Psoas muscle (tissue), 8 donors: ENCODE measurements at regions of chr9 and their contacts with region 1.

Region 1: DNA sequence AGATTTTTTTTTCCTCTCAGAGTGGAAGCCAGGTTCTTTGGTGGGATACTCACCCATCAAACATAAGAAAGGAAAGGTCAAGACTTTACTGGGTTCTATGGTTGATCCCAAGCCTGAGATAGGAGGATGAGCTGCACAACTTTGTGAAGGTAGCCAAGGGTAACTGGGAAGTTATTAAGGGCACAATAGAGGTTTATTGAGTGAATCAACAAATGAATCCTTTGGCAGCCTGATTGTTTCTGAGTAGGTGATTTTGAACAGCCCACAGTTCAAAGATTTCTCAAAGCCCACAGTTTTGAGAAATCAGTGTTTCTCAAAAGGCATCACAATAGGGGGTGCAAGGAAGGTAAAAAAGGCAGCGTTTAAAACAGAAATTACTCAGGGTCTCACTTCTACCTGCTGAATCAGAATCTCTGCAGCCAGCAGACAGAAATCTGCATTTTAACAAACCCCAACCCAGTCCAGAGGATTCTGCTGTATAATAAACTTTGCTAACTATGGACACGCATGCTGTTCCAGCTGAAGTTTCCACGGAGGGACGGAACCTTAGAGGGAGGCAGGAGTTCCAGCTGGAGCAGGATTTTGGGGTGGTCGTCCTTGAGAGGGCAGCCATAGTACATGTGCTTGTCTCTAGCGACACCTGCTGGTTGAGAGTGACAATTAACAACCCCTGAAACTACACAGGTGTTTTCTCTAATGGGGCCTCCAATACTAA is 32.7 kb upstream of the FSD1L start:
- DNase-seq: no peak
- ATAC-seq: peak; percentile 66 to 87 (median 76)
- H3K4me3 ChIP-seq: no peak overlapping the region
- H3K27ac ChIP-seq: no peak overlapping the region
- H3K4me1 ChIP-seq: no peaks in the 10 kb centered on the region
- H3K27me3 ChIP-seq: no peaks in the 10 kb centered on the region
- CTCF ChIP-seq: peak; percentile 90

Region 2: GRCh38 chr9:104795082-104795481 is 620.0 kb before region 1 on chr9:
- intact Hi-C with region 1: loop called in 1 of 2 experiments (anchors 10 kb)
- DNase-seq: no peak
- ATAC-seq: peak in 2 of 4 donors; percentile 26 to 56
- H3K4me3 ChIP-seq: no peak overlapping the region
- H3K27ac ChIP-seq: peak overlapping the region; percentile 21
- H3K4me1 ChIP-seq: no peaks in the 10 kb centered on the region
- H3K27me3 ChIP-seq: no peaks in the 10 kb centered on the region
- CTCF ChIP-seq: no peak

Region 3: GRCh38 chr9:104991144-104991953 is 423.8 kb before region 1 on chr9:
- intact Hi-C with region 1: loop called in 1 of 2 experiments (anchors 10 kb)
- DNase-seq: peak; percentile 93 to 97
- ATAC-seq: peak; percentile 87 to 91 (median 90)
- H3K4me3 ChIP-seq: peak overlapping the region; percentile 76
- H3K27ac ChIP-seq: peak overlapping the region; percentile 98
- H3K4me1 ChIP-seq: peaks cover 30% of the 10 kb centered on the region
- H3K27me3 ChIP-seq: no peaks in the 10 kb centered on the region
- CTCF ChIP-seq: no peak

Region 4: DNA sequence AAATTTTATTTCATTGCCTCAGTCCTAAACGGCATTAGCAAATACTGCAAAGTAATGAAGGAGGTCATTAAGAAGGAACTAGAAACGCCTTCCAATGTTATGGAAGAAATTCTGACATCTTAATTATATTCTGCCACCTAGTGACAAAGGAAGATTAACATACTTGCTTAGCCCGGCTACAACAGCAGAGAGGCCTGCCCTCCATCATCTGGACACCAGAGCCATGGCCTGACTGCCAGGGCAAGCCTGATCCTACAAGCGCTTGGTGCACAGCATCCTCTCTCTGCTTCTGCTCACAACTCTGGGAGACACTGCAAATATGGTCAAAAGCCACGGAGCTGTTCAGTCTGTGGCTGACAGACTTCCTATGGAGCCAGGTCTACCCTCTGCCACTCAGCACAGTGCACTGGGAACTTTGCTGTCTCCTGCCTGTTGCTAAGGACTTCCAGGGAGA is 257.9 kb before region 1 on chr9:
- intact Hi-C with region 1: loop called in 1 of 2 experiments (anchors 5 kb)
- DNase-seq: peak; percentile 47 to 69
- ATAC-seq: peak; percentile 82 to 95 (median 89)
- H3K4me3 ChIP-seq: no peak overlapping the region
- H3K27ac ChIP-seq: no peak overlapping the region
- H3K4me1 ChIP-seq: peaks cover 5% of the 10 kb centered on the region
- H3K27me3 ChIP-seq: no peaks in the 10 kb centered on the region
- CTCF ChIP-seq: peak; percentile 52

Region 5: DNA sequence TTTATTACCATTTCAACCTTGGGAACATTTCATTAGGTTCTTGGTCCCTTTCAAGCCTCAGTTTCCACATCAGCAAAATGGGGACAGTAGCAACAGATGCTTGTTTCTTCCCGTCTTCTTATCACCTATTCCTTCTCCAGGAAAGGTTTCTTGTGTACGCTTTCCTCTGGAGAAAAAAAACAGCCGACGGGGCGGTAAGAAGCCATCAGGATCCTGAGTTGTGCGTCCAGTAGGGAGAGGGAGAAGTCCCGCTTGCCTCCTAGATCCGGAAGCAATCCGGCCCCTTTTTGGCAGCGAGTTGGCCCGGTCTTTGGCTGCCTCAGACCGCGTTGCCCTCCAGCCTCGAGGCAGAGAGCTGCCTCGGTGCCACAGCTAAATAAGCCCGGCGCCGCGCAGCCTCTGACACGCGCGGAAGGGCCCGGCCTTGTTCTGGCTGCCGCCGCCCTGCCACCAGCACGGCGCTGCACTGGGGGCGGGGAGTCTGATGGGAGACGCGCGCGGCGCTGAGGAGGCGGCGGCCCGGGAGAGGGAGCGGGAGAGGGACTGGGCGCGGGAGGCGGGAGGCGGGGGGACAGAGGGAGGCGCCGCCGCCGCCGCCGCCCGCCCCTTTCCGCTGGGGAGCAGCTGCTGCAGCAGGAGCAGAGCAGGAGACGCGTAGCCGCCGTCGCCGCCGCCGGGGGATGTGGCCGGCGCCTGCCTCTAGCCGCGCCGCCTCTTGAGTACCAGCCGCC is 170.9 kb before region 1 on chr9 and contains the start of gene SLC44A1:
- intact Hi-C with region 1: loop called in 1 of 2 experiments (anchors 5 kb)
- DNase-seq: peak; percentile 99
- ATAC-seq: peak; percentile 98 to 99 (median 99)
- H3K4me3 ChIP-seq: peak within 1 kb of the TSS; percentile 83
- H3K27ac ChIP-seq: peak within 1 kb of the TSS; percentile 80
- H3K4me1 ChIP-seq: peaks cover 9% of the 10 kb centered on the region
- H3K27me3 ChIP-seq: no peaks in the 10 kb centered on the region
- CTCF ChIP-seq: peak; percentile 16
- total RNA-seq, gene SLC44A1: 7.0 to 18.9 (median 9.8) TPM

Region 6: DNA sequence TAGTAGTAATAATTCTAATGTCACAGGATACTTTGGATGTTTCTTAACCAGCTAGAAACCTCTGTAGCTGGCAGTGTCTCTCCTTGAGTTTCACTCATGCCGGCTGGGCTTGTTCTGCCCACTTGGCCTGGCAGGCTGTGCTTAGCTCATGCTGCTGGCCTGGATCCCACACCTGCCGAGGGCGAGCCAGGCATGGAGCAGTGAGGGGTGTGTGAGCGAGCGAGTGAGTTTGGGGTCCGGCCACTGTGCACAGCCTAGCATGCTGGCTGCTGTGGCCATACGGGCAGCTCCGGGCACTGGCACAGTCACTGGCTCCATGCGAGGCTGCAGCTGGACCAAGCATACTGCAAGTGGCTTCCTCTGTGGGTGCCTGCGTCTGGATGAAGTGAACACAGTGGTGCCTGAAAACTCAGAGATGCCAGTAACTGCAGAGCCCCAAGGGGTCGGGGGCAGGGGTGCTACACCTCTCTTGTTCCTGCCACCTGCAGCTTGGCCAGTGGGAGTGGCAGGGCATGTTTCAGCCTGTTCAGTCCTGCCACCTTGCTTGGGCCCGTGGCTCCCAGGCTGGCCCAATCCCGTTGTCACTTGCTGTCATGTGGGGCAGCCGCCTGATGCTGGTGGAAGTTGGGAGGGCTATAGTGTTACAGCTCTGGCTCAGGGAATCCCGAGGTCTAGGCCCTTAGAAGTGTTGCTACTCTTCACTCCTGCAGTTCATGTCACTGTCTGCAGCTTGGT is 42.6 kb after region 1 on chr9:
- intact Hi-C with region 1: no loop called
- DNase-seq: peak; percentile 56 to 80
- ATAC-seq: peak; percentile 91 to 92 (median 92)
- H3K4me3 ChIP-seq: peak overlapping the region; percentile 64
- H3K27ac ChIP-seq: peak overlapping the region; percentile 96
- H3K4me1 ChIP-seq: peaks cover 38% of the 10 kb centered on the region
- H3K27me3 ChIP-seq: no peaks in the 10 kb centered on the region
- CTCF ChIP-seq: no peak